Activated B cell treated with CpG ODN at 0.5 μM for 24 hours (primary cell): ENCODE measurements at regions of chr9 and their contacts with region 1.

Region 1: DNA sequence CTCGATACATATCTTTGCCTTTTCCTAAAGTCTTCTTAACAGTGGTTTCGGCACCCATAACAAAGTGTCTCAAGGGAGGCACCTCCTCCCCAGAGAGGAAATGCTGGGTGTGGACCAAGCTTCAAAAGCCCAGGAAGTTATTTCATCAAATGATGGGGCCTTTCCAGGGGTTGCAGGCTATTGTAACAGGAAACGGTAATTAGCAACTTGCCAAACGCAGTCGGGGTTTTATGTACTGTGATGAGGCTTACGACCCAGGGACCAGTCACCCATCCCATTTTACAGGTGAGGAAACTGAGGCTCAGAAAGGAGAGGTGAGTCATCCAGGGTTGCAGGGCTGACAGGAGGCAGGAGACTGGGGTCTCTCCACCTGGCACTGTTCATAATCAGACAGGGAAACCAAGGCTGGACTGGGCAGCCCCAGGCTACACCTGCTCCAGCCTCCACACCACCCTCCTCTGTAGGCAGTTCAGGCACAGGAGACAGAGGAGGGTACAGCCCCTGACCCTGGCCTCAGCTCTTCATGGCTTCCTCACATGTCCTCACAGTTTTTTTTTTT is 30.0 kb upstream of the SUSD3 start:
- DNase-seq: peak; percentile 36
- ATAC-seq: peak; percentile 89
- H3K4me3 Mint-ChIP-seq: peak overlapping the region; percentile 73
- H3K27ac Mint-ChIP-seq: peak overlapping the region; percentile 76
- H3K4me1 Mint-ChIP-seq: peaks cover 57% of the 10 kb centered on the region
- H3K27me3 Mint-ChIP-seq: no peaks in the 10 kb centered on the region
- CTCF ChIP-seq: no peak

Region 2: DNA sequence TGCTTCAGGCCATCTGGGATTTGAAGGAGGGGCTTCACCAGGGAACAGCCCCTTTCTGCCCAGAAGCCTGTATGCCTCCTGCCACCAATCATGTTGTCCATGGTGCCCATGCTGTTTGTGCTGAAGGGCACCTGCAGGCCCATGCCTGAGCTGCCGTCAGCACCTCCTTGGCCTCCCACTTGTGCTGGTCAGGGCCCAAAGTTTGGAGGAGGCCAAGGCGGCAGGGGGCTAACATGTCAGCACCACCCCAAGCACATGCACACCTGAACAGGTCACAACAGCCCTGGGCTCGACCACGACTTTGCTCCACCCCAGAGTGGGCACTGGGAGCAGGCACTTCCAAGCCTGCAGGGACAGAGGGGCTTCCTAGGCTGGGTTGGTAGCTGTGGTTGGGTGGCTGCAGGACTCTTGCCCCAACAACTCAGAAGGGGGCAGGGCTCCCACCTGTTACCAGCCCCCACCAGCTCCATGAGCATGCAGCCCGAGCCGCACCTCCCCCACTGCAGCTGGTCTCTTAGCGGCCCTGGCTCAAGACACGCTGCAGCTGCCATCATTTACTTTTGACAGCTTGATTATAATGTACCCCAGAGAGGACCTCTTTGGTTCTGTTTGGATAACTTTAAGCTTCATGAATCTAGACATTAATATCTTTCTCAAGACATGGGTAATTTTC is 1585.1 kb before region 1 on chr9:
- CTCF ChIA-PET with region 1: no interaction called
- POLR2A ChIA-PET with region 1: no interaction called
- intact Hi-C with region 1: no loop called
- DNase-seq: no peak
- ATAC-seq: no peak
- H3K4me3 Mint-ChIP-seq: no peak overlapping the region
- H3K27ac Mint-ChIP-seq: no peak overlapping the region
- H3K4me1 Mint-ChIP-seq: no peaks in the 10 kb centered on the region
- H3K27me3 Mint-ChIP-seq: peaks cover 32% of the 10 kb centered on the region
- CTCF ChIP-seq: no peak

Region 3: DNA sequence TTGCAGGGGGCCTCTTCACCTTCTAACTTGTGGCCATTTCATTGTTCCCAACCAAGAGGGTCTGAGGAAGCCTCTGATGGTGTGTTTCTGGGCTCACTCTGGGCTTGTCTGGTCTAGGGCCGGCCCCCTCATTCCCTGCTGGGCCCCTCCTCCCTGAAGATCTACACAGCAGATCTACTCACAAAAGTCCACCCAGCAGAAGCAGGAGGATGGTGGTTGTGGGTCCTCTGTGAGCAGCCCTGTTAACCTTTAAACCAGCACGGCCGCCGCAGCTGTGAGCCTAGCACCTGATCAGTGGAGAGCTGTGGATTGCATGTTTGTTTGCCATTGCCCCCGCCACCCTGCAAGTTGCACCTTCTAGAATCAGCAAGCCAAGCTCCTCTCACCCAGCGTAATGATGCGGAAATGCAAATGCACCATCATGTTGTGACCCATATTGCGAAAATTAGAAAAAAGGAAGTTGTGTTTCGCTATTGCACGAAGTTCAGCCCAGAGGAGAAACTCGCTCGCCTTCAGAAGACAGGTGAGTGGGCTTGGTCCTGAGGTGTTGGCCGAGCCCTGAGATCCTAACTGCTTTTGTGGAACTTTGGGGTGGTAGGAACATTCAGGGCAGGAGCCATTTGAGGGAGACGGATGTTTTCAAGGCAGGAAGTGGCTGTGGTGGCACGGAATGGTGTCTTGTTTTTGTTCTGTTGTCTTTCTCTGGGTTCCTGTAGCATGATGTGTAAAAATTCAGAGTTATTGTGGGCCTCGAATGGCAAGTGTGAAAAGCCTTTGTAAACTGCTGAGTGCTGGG is 64.5 kb before region 1 on chr9:
- CTCF ChIA-PET with region 1: interaction called, 3 read pairs
- POLR2A ChIA-PET with region 1: interaction called, 14 read pairs
- intact Hi-C with region 1: no loop called
- DNase-seq: peak; percentile 56
- ATAC-seq: peak; percentile 82
- H3K4me3 Mint-ChIP-seq: peak overlapping the region; percentile 94
- H3K27ac Mint-ChIP-seq: peak overlapping the region; percentile 99
- H3K4me1 Mint-ChIP-seq: peaks cover 69% of the 10 kb centered on the region
- H3K27me3 Mint-ChIP-seq: no peaks in the 10 kb centered on the region
- CTCF ChIP-seq: no peak

Region 4: DNA sequence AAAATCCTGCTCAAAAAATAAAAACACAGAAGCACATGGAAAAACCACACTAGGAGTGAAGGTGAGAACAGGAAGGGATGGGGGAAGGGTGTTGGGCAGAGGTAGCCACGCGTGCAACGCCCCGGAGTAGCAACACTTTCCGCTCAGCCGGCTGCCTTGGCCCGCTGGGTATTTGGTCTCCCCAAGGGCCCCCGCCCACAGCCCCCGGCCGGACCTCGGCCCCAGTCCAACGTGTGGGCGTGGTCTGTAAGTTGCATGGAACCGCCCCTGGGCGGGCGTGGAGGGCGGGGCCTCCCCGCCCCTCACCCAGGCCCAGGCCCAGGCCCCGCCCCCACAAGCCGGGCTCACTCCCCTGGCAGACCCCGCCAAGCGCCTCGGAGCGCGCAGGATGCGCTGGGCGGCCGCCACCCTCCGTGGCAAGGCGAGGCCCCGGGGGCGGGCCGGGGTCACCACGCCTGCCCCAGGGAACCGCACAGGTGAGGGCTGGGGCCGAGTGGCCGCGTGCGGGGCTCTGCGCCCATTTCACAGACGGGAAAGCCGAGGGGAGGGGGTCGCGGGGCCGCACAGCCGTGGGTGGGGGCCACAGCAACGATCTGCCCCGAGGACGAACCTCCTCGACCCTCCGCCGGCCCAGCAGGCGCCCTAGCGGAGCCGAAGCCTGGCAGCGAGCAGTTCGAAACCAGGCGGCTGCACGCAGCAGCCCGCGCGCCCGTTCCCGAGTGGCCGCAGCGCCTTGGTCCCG is 30.0 kb after region 1 on chr9 and contains the start of gene SUSD3:
- CTCF ChIA-PET with region 1: no interaction called
- POLR2A ChIA-PET with region 1: interaction called, 16 read pairs
- intact Hi-C with region 1: loop called (anchors 1 kb)
- DNase-seq: peak; percentile 73
- ATAC-seq: peak; percentile 75
- H3K4me3 Mint-ChIP-seq: peak within 1 kb of the TSS; percentile 87
- H3K27ac Mint-ChIP-seq: peak within 1 kb of the TSS; percentile 95
- H3K4me1 Mint-ChIP-seq: peaks cover 63% of the 10 kb centered on the region
- H3K27me3 Mint-ChIP-seq: no peaks in the 10 kb centered on the region
- CTCF ChIP-seq: no peak
- total RNA-seq, gene SUSD3: 9.1 and 12.9 TPM in 2 replicates

Region 5: GRCh38 chr9:93064392-93065134 is 36.0 kb after region 1 on chr9:
- CTCF ChIA-PET with region 1: interaction called, 4 read pairs
- POLR2A ChIA-PET with region 1: interaction called, 16 read pairs
- intact Hi-C with region 1: loop called (anchors 1 kb)
- DNase-seq: peak; percentile 53
- ATAC-seq: peak; percentile 85
- H3K4me3 Mint-ChIP-seq: peak overlapping the region; percentile 73
- H3K27ac Mint-ChIP-seq: peak overlapping the region; percentile 95
- H3K4me1 Mint-ChIP-seq: peaks cover 77% of the 10 kb centered on the region
- H3K27me3 Mint-ChIP-seq: no peaks in the 10 kb centered on the region
- CTCF ChIP-seq: no peak

Region 6: DNA sequence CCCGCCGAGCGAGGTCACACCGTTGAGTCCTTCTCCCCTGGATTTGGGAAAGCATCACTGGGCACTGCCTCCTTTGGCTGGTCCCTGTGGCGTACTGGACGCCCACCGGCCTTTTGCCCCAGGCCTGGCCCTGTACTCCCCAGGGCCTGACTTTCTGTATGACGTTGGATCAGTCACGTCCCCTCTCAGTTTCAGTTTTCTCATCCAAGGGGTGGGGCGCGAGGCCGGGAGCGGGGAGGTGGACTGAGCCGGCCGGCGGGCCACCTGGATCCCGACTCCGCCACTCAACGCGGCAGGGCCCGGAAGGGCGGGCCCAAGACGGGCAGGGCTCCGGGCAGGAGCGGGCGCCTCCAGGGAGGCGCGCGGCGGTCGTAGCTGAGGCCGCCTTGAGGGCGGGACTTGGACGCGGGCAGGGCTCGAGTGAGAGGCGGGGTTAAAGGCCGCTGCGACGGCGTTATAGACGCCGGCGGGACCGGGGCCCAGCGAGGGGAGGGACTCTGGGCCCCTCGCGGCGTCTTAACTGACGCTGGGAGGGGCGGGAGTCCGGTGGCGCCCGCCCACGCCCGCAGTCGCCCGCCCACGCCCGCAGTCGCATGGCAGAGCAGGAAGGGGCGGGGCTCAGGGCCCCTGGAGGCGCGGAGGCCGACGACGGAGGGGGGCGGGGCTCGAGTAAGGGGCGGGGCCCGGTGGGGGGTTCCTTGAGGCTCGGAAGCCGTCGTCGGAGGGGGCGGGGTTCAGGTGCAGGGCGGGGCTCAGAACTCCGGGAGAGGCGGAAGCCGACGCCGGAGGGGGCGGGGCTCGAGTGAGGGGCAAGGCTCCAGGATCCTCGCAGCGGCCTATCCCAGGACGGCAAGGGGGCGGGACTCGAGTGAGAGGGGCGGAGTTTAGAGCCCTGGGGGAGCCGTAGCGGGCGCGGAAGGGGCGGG is 66.9 kb after region 1 on chr9:
- CTCF ChIA-PET with region 1: no interaction called
- POLR2A ChIA-PET with region 1: interaction called, 19 read pairs
- intact Hi-C with region 1: loop called (anchors 2 kb)
- DNase-seq: peak; percentile 100
- ATAC-seq: peak; percentile 79
- H3K4me3 Mint-ChIP-seq: peak overlapping the region; percentile 86
- H3K27ac Mint-ChIP-seq: peak overlapping the region; percentile 99
- H3K4me1 Mint-ChIP-seq: peaks cover 83% of the 10 kb centered on the region
- H3K27me3 Mint-ChIP-seq: no peaks in the 10 kb centered on the region
- CTCF ChIP-seq: no peak

Region 7: GRCh38 chr9:93108291-93109041 is 79.9 kb after region 1 on chr9:
- CTCF ChIA-PET with region 1: interaction called, 4 read pairs
- POLR2A ChIA-PET with region 1: interaction called, 11 read pairs
- intact Hi-C with region 1: no loop called
- DNase-seq: no peak
- ATAC-seq: peak; percentile 56
- H3K4me3 Mint-ChIP-seq: no peak overlapping the region
- H3K27ac Mint-ChIP-seq: no peak overlapping the region
- H3K4me1 Mint-ChIP-seq: peaks cover 28% of the 10 kb centered on the region
- H3K27me3 Mint-ChIP-seq: no peaks in the 10 kb centered on the region
- CTCF ChIP-seq: no peak

Region 8: DNA sequence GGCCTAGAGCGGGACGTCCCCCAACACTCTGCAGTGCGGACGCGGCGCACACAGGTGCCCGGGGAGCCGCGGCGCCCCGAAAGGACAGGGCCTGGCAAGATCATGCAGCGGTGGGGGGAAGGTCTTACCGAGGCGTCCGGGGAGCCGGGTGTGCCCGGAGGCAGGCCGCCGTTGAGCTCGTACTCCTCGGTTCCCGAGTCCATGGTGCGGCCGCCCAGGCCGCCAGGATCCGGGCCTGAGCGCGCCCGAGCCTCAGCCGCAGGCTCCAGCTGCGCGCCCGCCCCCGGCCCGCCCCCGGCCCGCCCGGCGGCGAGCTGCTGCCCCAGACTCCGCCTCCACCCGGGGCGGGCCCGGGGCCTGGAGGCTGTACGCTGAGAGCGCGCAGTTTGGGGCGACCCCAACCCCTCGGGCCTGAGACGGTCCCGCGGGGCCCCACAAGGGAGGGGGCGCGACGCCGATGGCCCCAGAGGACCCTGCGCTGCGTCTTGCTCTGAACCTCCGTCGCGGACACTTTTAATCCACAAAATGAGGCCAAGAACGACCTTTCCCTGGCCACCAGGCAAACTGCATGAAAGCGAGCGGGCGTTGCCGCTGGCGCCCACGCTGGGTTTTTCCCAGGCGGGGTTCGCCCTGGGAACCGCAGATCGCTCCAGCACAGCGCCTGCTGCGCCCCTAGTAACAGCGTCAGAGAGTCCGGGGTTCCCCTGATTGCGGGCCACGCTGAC is 105.7 kb after region 1 on chr9 and contains the start of gene NINJ1:
- CTCF ChIA-PET with region 1: no interaction called
- POLR2A ChIA-PET with region 1: interaction called, 11 read pairs
- intact Hi-C with region 1: no loop called
- DNase-seq: peak; percentile 75
- ATAC-seq: peak; percentile 85
- H3K4me3 Mint-ChIP-seq: peak within 1 kb of the TSS; percentile 85
- H3K27ac Mint-ChIP-seq: peak within 1 kb of the TSS; percentile 80
- H3K4me1 Mint-ChIP-seq: peaks cover 48% of the 10 kb centered on the region
- H3K27me3 Mint-ChIP-seq: no peaks in the 10 kb centered on the region
- CTCF ChIP-seq: no peak
- total RNA-seq, gene NINJ1: 10.2 and 11.0 TPM in 2 replicates